AG04449 (cell line): ENCODE measurements at regions of chr19 and their contacts with region 1.

Region 1: GRCh38 chr19:13952154-13953035 is at the start of gene DCAF15:
- DNase-seq: peak; percentile 98
- H3K4me3 ChIP-seq: peak within 1 kb of the TSS; percentile 78
- CTCF ChIP-seq: no peak

Region 2: GRCh38 chr19:13894552-13894951 is 57.8 kb before region 1 on chr19:
- CTCF ChIA-PET with region 1: no interaction called
- POLR2A ChIA-PET with region 1: no interaction called
- DNase-seq: no peak
- H3K4me3 ChIP-seq: no peak overlapping the region
- CTCF ChIP-seq: no peak

Region 3: DNA sequence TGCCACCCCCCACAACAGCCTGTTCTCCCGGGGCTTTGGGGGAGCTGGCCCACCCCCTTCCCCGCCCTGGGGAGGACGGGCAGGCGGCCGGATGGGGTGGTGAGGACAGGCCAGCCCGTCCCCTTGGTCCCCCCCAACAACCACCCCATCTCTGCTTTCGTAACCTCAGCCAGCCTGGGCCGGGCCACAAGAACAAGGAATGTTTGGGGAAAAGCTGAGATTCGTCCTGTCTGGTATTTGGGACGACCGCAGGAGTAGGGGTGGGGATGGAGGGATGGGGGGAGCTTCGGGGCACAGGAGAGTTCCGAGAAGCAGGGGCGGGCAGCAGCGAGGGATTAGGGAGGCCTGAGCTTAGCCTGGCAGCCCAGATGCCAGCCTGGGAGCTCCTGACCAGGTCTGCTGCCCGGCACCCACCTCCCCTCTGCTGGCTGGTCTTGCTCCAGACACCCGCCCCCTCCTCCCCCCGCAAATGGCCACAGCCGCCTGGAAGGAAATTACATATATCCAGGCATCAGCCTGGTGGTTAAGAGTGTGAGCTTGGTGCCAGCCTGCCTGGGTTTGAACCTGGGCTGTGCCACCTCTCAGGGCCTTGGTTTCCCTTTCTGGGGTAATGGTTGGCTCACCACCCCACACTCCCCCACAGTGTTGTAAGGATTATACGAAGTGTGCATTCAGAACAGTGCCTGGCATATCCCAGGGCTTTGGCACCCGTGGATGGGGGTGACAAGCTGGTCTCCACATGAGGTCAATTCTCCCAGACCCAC is 13.9 kb before region 1 on chr19 and contains the start of gene PODNL1:
- CTCF ChIA-PET with region 1: interaction called, 11 read pairs
- POLR2A ChIA-PET with region 1: interaction called, 7 read pairs
- DNase-seq: peak; percentile 47
- H3K4me3 ChIP-seq: peak within 1 kb of the TSS; percentile 68
- CTCF ChIP-seq: no peak

Region 4: DNA sequence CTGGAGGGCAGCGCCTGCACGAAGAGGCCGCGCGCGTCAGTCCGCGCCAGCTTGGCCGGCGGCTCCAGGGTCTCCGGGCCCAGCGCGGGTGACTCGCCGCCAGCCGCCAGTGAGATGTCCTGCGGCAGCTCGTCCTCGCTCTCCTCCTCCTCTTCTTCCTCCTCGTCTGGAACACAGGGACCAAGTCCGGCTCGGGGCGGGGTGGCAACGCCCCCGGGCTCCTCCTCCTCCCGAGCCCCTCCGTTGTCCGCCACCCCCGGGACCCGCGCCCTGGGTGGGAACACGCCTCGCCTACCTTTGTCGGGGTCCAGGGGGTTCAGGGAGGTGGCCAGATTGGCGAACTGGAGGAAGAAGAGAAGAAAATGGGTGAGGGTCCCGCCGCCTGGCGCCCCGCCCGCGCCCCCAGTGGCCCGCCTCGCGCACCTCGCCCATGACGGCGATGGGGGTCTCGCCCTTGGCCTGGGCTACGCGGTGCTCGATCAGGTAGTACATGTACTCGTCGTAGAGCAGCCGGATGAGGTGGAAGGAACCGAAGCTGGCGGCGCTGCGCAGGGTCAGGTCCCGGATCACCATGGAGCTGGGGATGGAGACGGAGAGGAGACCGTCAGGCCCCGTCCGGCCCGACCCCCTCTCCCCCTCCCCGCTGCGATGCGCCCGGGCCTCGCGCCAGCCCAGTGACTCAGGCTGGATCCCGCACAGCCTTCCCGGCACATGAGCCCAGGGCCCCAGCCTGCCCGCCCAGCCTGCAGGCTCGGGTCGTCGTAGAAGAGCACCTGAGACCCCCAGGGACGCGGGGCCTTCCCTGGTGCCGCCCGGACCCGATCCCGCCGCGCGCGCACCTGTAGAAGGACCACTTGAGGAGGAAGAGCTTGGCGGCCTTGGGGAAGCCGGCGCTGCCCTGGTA is 10.6 kb after region 1 on chr19:
- CTCF ChIA-PET with region 1: no interaction called
- POLR2A ChIA-PET with region 1: no interaction called
- DNase-seq: no peak
- H3K4me3 ChIP-seq: no peak overlapping the region
- CTCF ChIP-seq: no peak